ENCODE measurements at regions of chr2 and their contacts with region 1.

Region 1: GRCh38 chr2:119218478-119219064 is 5.1 kb upstream of the STEAP3 start:
- DNase-seq: peak; percentile 74
- ATAC-seq: no peak
- H3K4me3 ChIP-seq: no peak overlapping the region
- H3K27ac ChIP-seq: no peak overlapping the region
- H3K4me1 ChIP-seq: peaks cover 3% of the 10 kb centered on the region; the same call in 1 of the 2 replicates
- H3K27me3 ChIP-seq: peaks cover 3% of the 10 kb centered on the region
- CTCF ChIP-seq: peak; percentile 75
- POLR2A ChIP-seq: no peak
- RAD21 ChIP-seq: peak; percentile 92

Region 2: DNA sequence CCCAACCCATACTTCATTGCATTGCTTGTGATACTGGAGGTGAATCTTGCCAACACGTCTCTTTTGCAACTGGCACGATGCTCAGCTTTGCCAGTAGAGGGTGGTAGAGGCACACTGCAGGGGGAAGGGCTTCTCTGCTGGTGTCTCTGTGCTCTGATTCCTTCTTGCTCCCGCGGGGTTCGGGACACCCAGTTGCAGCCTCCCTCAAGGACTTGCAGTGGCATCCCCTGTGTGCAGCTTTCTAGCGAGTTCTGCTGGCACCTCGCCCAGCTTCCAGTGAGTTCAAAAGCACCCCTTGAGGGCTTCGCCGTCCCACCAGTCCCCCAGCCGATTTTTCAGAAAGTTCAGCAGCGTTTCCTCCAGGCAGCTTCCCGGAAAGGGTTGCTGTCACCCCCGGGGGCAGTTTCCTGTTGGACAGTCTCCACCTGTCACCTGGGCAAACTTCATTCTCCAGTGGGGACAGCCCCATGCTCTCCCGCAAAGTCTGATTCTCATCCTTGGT is 335.8 kb before region 1 on chr2:
- CTCF ChIA-PET with region 1: no interaction called
- POLR2A ChIA-PET with region 1: no interaction called
- dilution Hi-C with region 1: no loop called
- in situ Hi-C with region 1: no loop called
- intact Hi-C with region 1: loop called (anchors 5 kb)
- DNase-seq: peak; percentile 38
- ATAC-seq: peak; percentile 86
- H3K4me3 ChIP-seq: no peak overlapping the region
- H3K27ac ChIP-seq: no peak overlapping the region
- H3K4me1 ChIP-seq: no peaks in the 10 kb centered on the region
- H3K27me3 ChIP-seq: no peaks in the 10 kb centered on the region; the same call in 1 of the 2 replicates
- CTCF ChIP-seq: peak; percentile 72
- POLR2A ChIP-seq: no peak
- RAD21 ChIP-seq: peak; percentile 64

Region 3: DNA sequence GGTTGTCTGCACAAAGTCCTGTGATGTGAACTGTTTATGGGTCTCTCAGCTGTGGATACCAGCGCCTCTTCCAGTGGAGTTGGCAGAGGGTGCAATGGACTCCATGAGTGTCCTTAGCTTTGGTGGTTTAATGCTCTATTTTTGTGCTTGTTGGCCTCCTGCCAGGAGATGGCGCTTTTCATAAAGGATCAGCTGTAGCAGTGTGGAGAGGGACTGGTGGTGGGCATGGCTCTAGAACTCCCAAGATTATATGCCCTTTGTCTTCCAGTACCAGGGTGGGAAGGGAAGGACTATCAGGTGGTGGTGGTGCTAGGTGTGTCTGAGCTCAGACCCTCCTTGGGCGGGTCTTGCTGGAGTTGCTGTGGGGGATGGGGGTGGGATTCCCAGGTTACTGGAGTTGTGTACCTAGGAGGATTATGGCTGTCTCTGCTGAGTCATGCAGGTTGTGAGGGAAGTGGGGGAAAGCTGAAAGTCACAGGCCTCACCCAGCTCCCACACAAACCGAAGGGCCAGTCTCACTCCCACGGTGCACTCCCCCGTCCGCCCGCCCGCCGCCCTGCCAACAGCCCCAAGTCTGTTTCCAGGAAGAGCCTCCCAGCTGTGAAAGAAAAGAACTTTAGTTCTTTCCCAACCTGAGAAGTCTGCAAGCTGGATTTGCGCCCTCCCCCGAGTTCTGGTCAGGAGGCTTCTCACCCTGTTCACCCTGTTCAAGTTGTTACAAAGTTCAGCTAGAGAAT is 168.4 kb before region 1 on chr2:
- CTCF ChIA-PET with region 1: no interaction called
- POLR2A ChIA-PET with region 1: no interaction called
- dilution Hi-C with region 1: no loop called
- in situ Hi-C with region 1: no loop called
- intact Hi-C with region 1: no loop called
- DNase-seq: no peak
- ATAC-seq: no peak
- H3K4me3 ChIP-seq: no peak overlapping the region
- H3K27ac ChIP-seq: no peak overlapping the region
- H3K4me1 ChIP-seq: no peaks in the 10 kb centered on the region
- H3K27me3 ChIP-seq: no peaks in the 10 kb centered on the region
- CTCF ChIP-seq: no peak
- POLR2A ChIP-seq: no peak
- RAD21 ChIP-seq: no peak

Measured in IMR-90 (cell line).